ENCODE measurements at regions of chr1 and their contacts with region 1.

Region 1: GRCh38 chr1:226186124-226187018 is at the start of gene ACBD3:
- DNase-seq: peak; percentile 57 to 93
- H3K4me3 ChIP-seq: peak within 1 kb of the TSS; percentile 96 to 100
- H3K27ac ChIP-seq: peak within 1 kb of the TSS; percentile 87 to 98
- H3K4me1 ChIP-seq: peaks cover 6 to 17% of the 10 kb centered on the region in 2 donors
- H3K27me3 ChIP-seq: no peaks in the 10 kb centered on the region
- CTCF ChIP-seq: no peak
- total RNA-seq, gene ACBD3: 31.5 TPM

Region 2: GRCh38 chr1:225923692-225924555 is 262.4 kb before region 1 on chr1 and contains the start of gene PYCR2:
- intact Hi-C with region 1: loop called (anchors 5 kb)
- DNase-seq: peak; percentile 87 to 98
- H3K4me3 ChIP-seq: peak within 1 kb of the TSS; percentile 80 to 84
- H3K27ac ChIP-seq: peak within 1 kb of the TSS; percentile 85 to 95
- H3K4me1 ChIP-seq: peaks cover 6 to 19% of the 10 kb centered on the region in 2 donors
- H3K27me3 ChIP-seq: no peaks in the 10 kb centered on the region
- CTCF ChIP-seq: no peak
- total RNA-seq, gene PYCR2: 126 TPM

Region 3: DNA sequence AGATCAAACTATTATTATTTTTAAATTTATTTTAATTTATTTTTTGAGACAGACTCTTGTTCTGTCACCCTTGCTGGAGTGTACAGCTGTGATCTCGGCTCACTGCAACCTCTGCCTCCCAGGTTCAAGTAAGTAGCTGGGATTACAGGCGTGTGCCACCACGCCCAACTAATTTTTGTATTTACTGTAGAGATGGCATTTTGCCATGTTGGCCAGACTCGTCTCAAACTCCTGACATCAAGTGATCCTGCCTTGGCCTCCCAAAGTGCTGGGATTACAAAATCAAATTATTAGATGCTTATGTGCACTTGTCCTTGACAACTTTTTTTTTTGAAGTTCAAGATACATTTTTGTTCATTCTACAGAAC is 107.2 kb after region 1 on chr1:
- intact Hi-C with region 1: no loop called
- DNase-seq: no peak
- H3K4me3 ChIP-seq: no peak overlapping the region
- H3K27ac ChIP-seq: no peak overlapping the region
- H3K4me1 ChIP-seq: no peaks in the 10 kb centered on the region
- H3K27me3 ChIP-seq: no peaks in the 10 kb centered on the region
- CTCF ChIP-seq: no peak

Measured in ascending aorta (tissue), 2 donors.